Gastrocnemius medialis (tissue), 4 donors: ENCODE measurements at regions of chr18 and their contacts with region 1.

Region 1: DNA sequence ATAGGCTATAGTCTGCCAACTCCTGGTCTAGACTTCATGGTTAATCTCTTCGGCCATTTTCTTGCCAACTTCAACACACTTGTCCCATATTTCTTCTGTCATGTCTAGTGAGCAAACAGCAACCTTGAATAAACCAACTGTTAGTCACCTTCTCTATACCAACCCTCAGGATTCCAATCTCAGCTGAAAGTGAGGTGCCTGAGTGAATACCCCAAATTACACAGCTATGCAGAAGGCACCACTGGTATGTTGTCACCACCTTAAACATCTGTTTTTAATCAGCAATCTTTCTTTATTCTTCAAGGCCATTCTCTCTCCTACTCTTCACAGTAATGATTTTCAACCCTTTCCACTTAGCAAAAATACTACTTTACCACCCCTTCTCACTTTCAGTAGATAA is 39.3 kb downstream of the THOC1 start:
- DNase-seq: no peak
- ATAC-seq: no peak
- H3K4me3 ChIP-seq: no peak overlapping the region
- H3K27ac ChIP-seq: no peak overlapping the region
- H3K4me1 ChIP-seq: no peaks in the 10 kb centered on the region
- H3K27me3 ChIP-seq: no peaks in the 10 kb centered on the region
- CTCF ChIP-seq: no peak
- POLR2A ChIP-seq: no peak

Region 2: DNA sequence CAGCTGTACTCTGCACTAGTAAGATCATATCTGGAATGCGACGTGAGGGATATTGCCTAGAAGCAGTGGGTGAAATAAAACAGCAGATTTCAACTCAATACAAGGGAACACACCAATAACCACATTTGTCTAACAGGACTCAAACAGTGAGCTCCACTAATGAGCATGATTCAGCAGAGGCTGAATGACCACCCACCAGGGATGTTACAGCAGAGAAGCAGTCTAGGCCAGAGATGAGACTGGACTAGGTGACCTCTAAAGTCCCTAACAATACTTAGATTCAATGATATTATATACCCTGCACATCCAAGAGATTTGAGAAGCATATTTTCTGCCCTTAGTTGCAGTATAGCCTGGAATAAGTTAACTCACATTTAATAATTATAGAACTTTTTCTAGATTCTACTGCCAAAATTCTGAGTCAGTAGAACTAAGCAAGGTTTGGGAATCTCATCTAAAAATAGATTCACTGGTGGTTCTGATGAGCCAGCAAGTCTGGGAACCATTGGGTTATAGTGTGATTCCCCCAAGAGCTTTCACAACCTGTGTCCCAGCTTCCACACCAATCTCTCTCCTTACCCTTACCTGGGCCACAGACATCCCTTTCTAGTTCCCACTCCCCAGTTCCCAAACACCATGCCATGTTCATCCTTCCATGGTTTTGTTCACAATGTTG is 33.0 kb after region 1 on chr18:
- in situ Hi-C with region 1: no loop called
- intact Hi-C with region 1: loop called (anchors 5 kb)
- DNase-seq: no peak
- ATAC-seq: no peak
- H3K4me3 ChIP-seq: no peak overlapping the region
- H3K27ac ChIP-seq: no peak overlapping the region
- H3K4me1 ChIP-seq: peaks cover 0 to 8% of the 10 kb centered on the region in 2 donors
- H3K27me3 ChIP-seq: no peaks in the 10 kb centered on the region
- CTCF ChIP-seq: no peak
- POLR2A ChIP-seq: no peak